CD4-positive, alpha-beta T cell (primary cell): ENCODE measurements at regions of chr16 and their contacts with region 1.

Region 1: GRCh38 chr16:84726079-84726668 is 26.4 kb downstream of the USP10 start:
- DNase-seq: peak; percentile 76 to 93 (median 84)
- ATAC-seq: peak; percentile 76
- H3K4me3 ChIP-seq: no peak overlapping the region
- H3K4me3 Mint-ChIP-seq: peak overlapping the region; percentile 39
- H3K27ac ChIP-seq: no peak overlapping the region
- H3K27ac Mint-ChIP-seq: no peak overlapping the region
- H3K4me1 ChIP-seq: peaks cover 17% of the 10 kb centered on the region
- H3K4me1 Mint-ChIP-seq: peaks cover 81% of the 10 kb centered on the region
- H3K27me3 ChIP-seq: no peaks in the 10 kb centered on the region
- H3K27me3 Mint-ChIP-seq: no peaks in the 10 kb centered on the region
- CTCF ChIP-seq: peak; percentile 99

Region 2: GRCh38 chr16:84084570-84085270 is 641.5 kb before region 1 on chr16:
- CTCF ChIA-PET with region 1: no interaction called
- POLR2A ChIA-PET with region 1: no interaction called
- intact Hi-C with region 1: no loop called
- DNase-seq: peak; percentile 50 to 87 (median 64)
- ATAC-seq: peak; percentile 85
- H3K4me3 ChIP-seq: no peak overlapping the region
- H3K4me3 Mint-ChIP-seq: peak overlapping the region; percentile 42
- H3K27ac ChIP-seq: no peak overlapping the region
- H3K27ac Mint-ChIP-seq: peak overlapping the region; percentile 63
- H3K4me1 ChIP-seq: peaks cover 28% of the 10 kb centered on the region
- H3K4me1 Mint-ChIP-seq: peaks cover 48% of the 10 kb centered on the region
- H3K27me3 ChIP-seq: no peaks in the 10 kb centered on the region
- H3K27me3 Mint-ChIP-seq: no peaks in the 10 kb centered on the region
- CTCF ChIP-seq: peak; percentile 81

Region 3: GRCh38 chr16:84672276-84673202 is 53.6 kb before region 1 on chr16:
- CTCF ChIA-PET with region 1: interaction called, 40 read pairs
- POLR2A ChIA-PET with region 1: no interaction called
- intact Hi-C with region 1: loop called (anchors 1 kb)
- DNase-seq: peak; percentile 68 to 90 (median 78)
- ATAC-seq: peak; percentile 96
- H3K4me3 ChIP-seq: no peak overlapping the region
- H3K4me3 Mint-ChIP-seq: no peak overlapping the region
- H3K27ac ChIP-seq: no peak overlapping the region
- H3K27ac Mint-ChIP-seq: no peak overlapping the region
- H3K4me1 ChIP-seq: peaks cover 6% of the 10 kb centered on the region
- H3K4me1 Mint-ChIP-seq: peaks cover 10% of the 10 kb centered on the region
- H3K27me3 ChIP-seq: no peaks in the 10 kb centered on the region
- H3K27me3 Mint-ChIP-seq: no peaks in the 10 kb centered on the region
- CTCF ChIP-seq: peak; percentile 98

Region 4: GRCh38 chr16:84699712-84700445 is 26.3 kb before region 1 on chr16 and contains the start of gene USP10:
- CTCF ChIA-PET with region 1: interaction called, 14 read pairs
- POLR2A ChIA-PET with region 1: interaction called, 4 read pairs
- intact Hi-C with region 1: loop called in 1 of 2 experiments (anchors 1 kb)
- DNase-seq: peak; percentile 67 to 95 (median 81)
- ATAC-seq: peak; percentile 83
- H3K4me3 ChIP-seq: peak within 1 kb of the TSS; percentile 83
- H3K4me3 Mint-ChIP-seq: peak within 1 kb of the TSS; percentile 97
- H3K27ac ChIP-seq: peak within 1 kb of the TSS; percentile 61 to 79
- H3K27ac Mint-ChIP-seq: peak within 1 kb of the TSS; percentile 91
- H3K4me1 ChIP-seq: peaks cover 24% of the 10 kb centered on the region
- H3K4me1 Mint-ChIP-seq: peaks cover 41% of the 10 kb centered on the region
- H3K27me3 ChIP-seq: no peaks in the 10 kb centered on the region
- H3K27me3 Mint-ChIP-seq: no peaks in the 10 kb centered on the region
- CTCF ChIP-seq: no peak
- total RNA-seq, gene USP10: 99.3 to 106 TPM

Region 5: DNA sequence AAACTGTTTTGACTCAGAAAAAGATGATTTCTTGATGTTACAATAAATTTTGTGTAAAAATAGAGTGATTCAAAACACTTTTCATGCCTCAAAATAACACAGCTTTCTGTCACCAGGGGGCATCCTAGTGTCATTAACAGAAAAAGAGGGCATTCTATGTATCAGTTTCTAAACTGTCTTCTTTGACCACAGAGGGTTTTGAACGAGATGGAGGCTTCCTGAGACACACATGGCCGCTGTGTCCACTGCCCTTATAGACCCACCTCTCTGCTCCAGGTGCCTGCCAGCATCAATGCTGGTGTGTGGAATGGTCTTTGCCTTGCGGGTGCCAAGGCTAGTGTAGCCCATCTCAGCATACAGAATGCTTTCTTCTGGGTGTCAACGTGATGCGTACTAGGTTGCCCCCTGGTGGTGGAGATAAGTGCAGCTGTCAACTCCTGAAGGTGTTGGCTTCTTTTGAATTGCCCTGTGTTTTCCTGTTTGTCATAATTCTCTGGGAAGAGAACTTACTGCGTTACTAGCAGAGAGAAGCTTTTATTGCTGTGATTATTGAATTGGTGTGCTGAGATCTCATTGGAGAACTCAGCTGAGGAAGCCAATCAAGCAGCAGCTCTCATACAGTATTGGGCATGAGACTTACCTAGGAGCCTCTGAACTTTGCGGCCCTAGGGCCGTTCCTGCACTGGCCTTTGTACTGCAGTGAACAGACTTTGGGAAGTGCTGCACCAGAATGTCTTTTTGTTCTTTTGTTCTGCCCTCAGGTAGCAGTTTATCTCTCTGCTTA is 12.3 kb after region 1 on chr16:
- CTCF ChIA-PET with region 1: interaction called, 26 read pairs
- POLR2A ChIA-PET with region 1: no interaction called
- intact Hi-C with region 1: no loop called
- DNase-seq: peak; percentile 62 to 90 (median 66)
- ATAC-seq: peak; percentile 73
- H3K4me3 ChIP-seq: no peak overlapping the region
- H3K4me3 Mint-ChIP-seq: peak overlapping the region; percentile 3
- H3K27ac ChIP-seq: no peak overlapping the region
- H3K27ac Mint-ChIP-seq: peak overlapping the region; percentile 25
- H3K4me1 ChIP-seq: peaks cover 40% of the 10 kb centered on the region
- H3K4me1 Mint-ChIP-seq: peaks cover 37% of the 10 kb centered on the region
- H3K27me3 ChIP-seq: no peaks in the 10 kb centered on the region
- H3K27me3 Mint-ChIP-seq: no peaks in the 10 kb centered on the region
- CTCF ChIP-seq: peak; percentile 95